ENCODE measurements at regions of chr15 and their contacts with region 1.

Region 1: GRCh38 chr15:48868536-48868935 is 9.4 kb upstream of the EID1 start:
- DNase-seq: peak; percentile 87
- ATAC-seq: peak; percentile 52
- H3K4me3 ChIP-seq: no peak overlapping the region
- H3K27ac ChIP-seq: peak overlapping the region; percentile 97
- H3K4me1 ChIP-seq: peaks cover 21% of the 10 kb centered on the region
- H3K27me3 ChIP-seq: no peaks in the 10 kb centered on the region
- CTCF ChIP-seq: no peak
- POLR2A ChIP-seq: no peak
- RAD21 ChIP-seq: no peak

Region 2: DNA sequence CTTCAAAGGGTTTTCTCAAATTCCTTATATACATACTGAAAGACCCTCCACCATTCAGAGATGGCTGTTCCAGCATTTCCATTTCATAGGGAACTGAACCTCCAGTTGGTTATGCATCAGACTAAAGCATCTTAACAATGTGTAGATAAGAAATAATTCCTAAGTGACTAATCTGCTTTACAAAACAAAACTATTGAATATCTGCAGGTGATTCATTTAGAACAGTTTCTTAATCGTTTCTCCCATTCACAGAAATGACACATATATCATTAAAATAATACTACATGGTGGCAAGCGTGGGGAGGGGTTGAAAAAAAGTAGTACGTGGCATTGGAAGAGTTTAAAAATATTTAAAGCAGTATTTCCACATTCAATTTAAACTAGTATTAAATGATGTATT is 267.4 kb after region 1 on chr15:
- CTCF ChIA-PET with region 1: no interaction called
- POLR2A ChIA-PET with region 1: no interaction called
- dilution Hi-C with region 1: no loop called
- in situ Hi-C with region 1: no loop called
- intact Hi-C with region 1: loop called (anchors 5 kb)
- DNase-seq: peak; percentile 92
- ATAC-seq: peak; percentile 86
- H3K4me3 ChIP-seq: no peak overlapping the region
- H3K27ac ChIP-seq: no peak overlapping the region; the same call in 1 of the 2 replicates
- H3K4me1 ChIP-seq: peaks cover 11% of the 10 kb centered on the region
- H3K27me3 ChIP-seq: no peaks in the 10 kb centered on the region
- CTCF ChIP-seq: no peak
- POLR2A ChIP-seq: no peak
- RAD21 ChIP-seq: no peak

Region 3: DNA sequence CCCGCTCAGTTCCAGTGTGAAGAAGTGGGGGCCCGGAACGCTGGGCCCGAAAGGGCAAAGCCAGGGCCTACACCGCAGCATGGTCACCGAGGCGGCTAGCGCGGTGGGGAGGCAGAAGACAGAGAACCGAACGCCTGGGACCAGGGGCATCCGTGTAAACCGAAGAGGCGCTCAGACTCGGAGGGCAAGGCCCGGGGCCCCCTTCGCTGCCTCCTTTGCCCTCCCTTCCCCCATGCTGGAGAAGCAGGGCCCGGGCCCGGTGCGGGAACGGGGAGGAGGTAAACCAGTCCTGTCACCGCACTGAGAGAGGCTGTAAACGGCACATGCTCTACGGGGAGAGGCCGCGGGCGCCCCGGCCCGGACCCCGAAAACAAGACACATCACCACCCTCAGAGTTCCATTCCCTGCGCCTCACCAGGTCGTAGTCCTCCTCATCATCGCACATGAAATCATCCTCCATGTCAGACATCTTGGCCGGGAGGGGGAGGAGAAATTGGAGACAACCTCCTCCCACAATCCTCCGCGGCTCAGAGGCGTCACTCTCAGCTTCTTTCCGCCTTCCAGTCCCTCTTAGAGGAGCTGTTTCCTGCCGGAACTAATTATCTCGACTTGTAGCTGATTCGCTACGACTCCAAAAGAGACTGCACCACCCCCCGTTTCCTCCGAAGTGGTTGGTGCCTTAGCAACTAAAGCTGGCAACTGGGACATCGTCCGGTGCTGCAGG is 286.7 kb after region 1 on chr15 and contains the start of gene COPS2:
- CTCF ChIA-PET with region 1: no interaction called
- POLR2A ChIA-PET with region 1: no interaction called
- dilution Hi-C with region 1: no loop called
- in situ Hi-C with region 1: loop called (anchors 5 kb)
- intact Hi-C with region 1: no loop called
- DNase-seq: peak; percentile 99
- ATAC-seq: peak; percentile 97
- H3K4me3 ChIP-seq: peak within 1 kb of the TSS; percentile 70
- H3K27ac ChIP-seq: peak within 1 kb of the TSS; percentile 78
- H3K4me1 ChIP-seq: no peaks in the 10 kb centered on the region
- H3K27me3 ChIP-seq: no peaks in the 10 kb centered on the region
- CTCF ChIP-seq: no peak
- POLR2A ChIP-seq: peak; percentile 86
- RAD21 ChIP-seq: no peak
- total RNA-seq, gene COPS2: 75.6 and 103 TPM in 2 replicates

Measured in IMR-90 (cell line).